Heart left ventricle (tissue), 16 donors: ENCODE measurements at regions of chr5 and their contacts with region 1.

Region 1: DNA sequence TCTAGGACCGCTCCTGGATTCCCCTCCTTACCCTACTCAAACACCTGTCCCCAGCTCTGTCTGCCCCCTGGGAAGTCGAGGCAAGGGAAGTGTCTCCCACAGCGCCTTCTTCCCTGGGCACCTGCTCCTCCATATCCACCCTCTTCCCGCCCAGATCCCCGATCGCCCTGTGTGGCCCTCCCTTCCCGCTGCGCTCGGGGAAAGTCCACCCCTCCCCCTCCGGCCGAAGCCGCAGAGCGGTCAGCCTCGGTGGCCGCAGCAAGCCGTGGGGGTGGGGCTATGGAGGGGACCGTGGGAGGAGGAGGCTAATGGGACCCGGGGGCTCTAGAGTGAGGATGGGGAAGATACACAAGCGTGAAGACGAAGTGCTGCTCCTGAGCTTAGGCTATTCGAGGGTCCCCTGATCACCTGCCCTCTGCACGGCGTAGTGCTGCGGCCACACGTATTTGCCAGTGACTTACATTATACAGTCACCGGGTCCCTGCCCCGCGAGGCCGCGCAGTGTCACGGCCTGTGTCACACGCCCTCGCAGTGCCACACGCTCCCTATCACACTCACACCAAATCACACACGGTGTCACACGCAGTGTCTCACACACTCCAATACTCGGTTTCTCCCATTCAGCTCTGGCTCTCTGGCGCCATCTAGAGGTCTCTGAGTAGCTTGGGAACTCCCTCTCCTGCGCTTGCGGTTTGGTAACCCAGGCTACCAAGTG is 658 bp upstream of the PCDH1 start:
- DNase-seq: peak; percentile 89 to 95 (median 91)
- ATAC-seq: peak; percentile 70 to 87 (median 84)
- H3K4me3 ChIP-seq: peak overlapping the region; percentile 11 to 95 (median 80)
- H3K27ac ChIP-seq: peak overlapping the region; percentile 76 to 94 (median 90)
- H3K4me1 ChIP-seq: peaks cover 0 to 88% (median 60%) of the 10 kb centered on the region in 12 donors
- H3K27me3 ChIP-seq: peaks cover 3 to 91% (median 32%) of the 10 kb centered on the region in 9 donors
- CTCF ChIP-seq: peak; percentile 97 to 99 (median 98)
- POLR2A ChIP-seq: no peak

Region 2: GRCh38 chr5:141691867-141692532 is 186.9 kb before region 1 on chr5:
- intact Hi-C with region 1: loop called in 2 of 10 experiments (anchors 2 kb)
- DNase-seq: peak; percentile 85 to 93 (median 87)
- ATAC-seq: peak; percentile 79 to 91 (median 90)
- H3K4me3 ChIP-seq: peak overlapping the region in 11 of 12 donors; percentile 11 to 51 (median 37)
- H3K27ac ChIP-seq: no peak overlapping the region
- H3K4me1 ChIP-seq: peaks cover 0 to 28% (median 10%) of the 10 kb centered on the region in 12 donors
- H3K27me3 ChIP-seq: peaks cover 0 to 3% (median 0%) of the 10 kb centered on the region in 9 donors
- CTCF ChIP-seq: peak; percentile 98 to 100 (median 99)
- POLR2A ChIP-seq: no peak

Region 3: GRCh38 chr5:141757402-141757801 is 121.5 kb before region 1 on chr5:
- intact Hi-C with region 1: loop called in 6 of 10 experiments (anchors 2 to 5 kb)
- DNase-seq: peak in 1 of 5 donors; percentile 17
- ATAC-seq: peak in 3 of 4 donors; percentile 28 to 47 (median 38)
- H3K4me3 ChIP-seq: no peak overlapping the region
- H3K27ac ChIP-seq: no peak overlapping the region
- H3K4me1 ChIP-seq: peaks cover 0 to 22% (median 10%) of the 10 kb centered on the region in 12 donors
- H3K27me3 ChIP-seq: peaks cover 0 to 37% (median 16%) of the 10 kb centered on the region in 9 donors
- CTCF ChIP-seq: peak in 9 of 12 donors; percentile 6 to 50 (median 29)
- POLR2A ChIP-seq: no peak

Region 4: GRCh38 chr5:141805874-141806595 is 72.8 kb before region 1 on chr5:
- intact Hi-C with region 1: loop called in 7 of 10 experiments (anchors 2 to 10 kb)
- DNase-seq: peak in 4 of 5 donors; percentile 62 to 73 (median 68)
- ATAC-seq: peak; percentile 83 to 92 (median 86)
- H3K4me3 ChIP-seq: no peak overlapping the region
- H3K27ac ChIP-seq: peak overlapping the region; percentile 69 to 94 (median 84)
- H3K4me1 ChIP-seq: peaks cover 0 to 54% (median 32%) of the 10 kb centered on the region in 12 donors
- H3K27me3 ChIP-seq: peaks cover 0 to 30% (median 5%) of the 10 kb centered on the region in 9 donors
- CTCF ChIP-seq: peak in 3 of 12 donors; percentile 5 to 28 (median 12)
- POLR2A ChIP-seq: no peak

Region 5: GRCh38 chr5:141821361-141821925 is 57.4 kb before region 1 on chr5:
- intact Hi-C with region 1: loop called in 7 of 10 experiments (anchors 2 to 10 kb)
- DNase-seq: no peak
- ATAC-seq: peak in 2 of 4 donors; percentile 17 to 23
- H3K4me3 ChIP-seq: no peak overlapping the region
- H3K27ac ChIP-seq: peak overlapping the region; percentile 43 to 78 (median 59)
- H3K4me1 ChIP-seq: peaks cover 0 to 41% (median 15%) of the 10 kb centered on the region in 12 donors
- H3K27me3 ChIP-seq: peaks cover 0 to 3% (median 0%) of the 10 kb centered on the region in 9 donors
- CTCF ChIP-seq: no peak
- POLR2A ChIP-seq: no peak

Region 6: DNA sequence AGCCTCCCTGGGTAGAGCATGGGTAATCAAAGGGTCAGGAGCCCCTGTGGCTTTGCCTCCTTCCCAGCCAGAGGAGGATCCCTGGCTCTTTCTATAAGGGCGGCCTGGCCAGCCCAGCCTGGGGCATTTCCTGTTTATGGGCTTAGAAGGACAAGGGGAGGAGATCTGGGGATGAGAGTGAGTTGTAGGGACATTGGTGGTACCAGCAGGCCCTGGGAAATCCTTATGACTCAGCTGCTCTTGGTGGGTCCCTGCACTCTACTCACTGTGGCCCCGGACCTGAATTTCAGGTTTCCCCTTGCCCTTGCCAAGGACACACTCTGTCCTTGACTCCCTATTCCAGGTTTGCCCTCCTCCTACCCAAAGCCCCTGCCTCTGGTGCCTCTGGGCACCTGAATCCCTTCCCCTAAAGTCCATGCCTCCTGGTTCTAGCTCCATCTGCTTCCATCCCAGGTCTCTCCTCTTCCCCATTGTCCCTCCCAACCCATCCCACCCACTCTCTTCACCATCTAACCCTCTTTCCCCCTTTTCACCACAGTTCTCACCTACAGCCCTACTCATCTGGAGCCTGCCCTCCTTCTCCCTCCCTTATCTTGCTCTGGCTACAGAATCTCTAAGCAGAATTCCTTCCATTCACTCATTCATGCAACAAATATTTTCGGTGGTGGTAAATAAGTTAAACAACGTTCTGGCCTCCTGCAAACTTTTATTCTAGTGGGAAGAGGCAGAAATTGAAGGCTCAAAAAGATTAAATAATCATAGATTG is 35.5 kb before region 1 on chr5:
- intact Hi-C with region 1: loop called in 4 of 10 experiments (anchors 2 to 5 kb)
- DNase-seq: no peak
- ATAC-seq: peak in 2 of 4 donors; percentile 9 to 14
- H3K4me3 ChIP-seq: no peak overlapping the region
- H3K27ac ChIP-seq: peak overlapping the region; percentile 32 to 75 (median 64)
- H3K4me1 ChIP-seq: peaks cover 3 to 72% (median 48%) of the 10 kb centered on the region in 12 donors
- H3K27me3 ChIP-seq: peaks cover 0 to 3% (median 0%) of the 10 kb centered on the region in 9 donors
- CTCF ChIP-seq: no peak
- POLR2A ChIP-seq: no peak

Region 7: DNA sequence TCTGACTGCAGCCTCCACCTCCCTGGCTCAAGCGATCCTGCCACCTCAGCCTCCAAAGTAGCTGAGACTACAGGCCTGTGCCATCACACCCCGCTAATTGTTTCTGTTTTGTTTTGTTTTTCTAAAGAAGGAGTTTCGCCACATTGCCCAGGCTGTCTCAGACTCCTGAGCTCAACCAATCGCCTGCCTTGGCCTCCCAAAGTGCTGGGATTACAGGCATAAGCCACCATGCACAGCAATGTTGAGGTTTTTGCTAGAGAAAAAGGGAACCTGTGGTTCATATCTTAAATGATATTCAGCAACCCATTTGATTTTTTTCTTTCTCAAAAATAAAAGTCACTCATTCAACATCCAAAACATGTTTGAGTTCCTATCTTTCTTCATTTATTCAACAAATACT is 24.4 kb after region 1 on chr5:
- intact Hi-C with region 1: no loop called
- DNase-seq: no peak
- ATAC-seq: no peak
- H3K4me3 ChIP-seq: no peak overlapping the region
- H3K27ac ChIP-seq: peak overlapping the region in 1 of 12 donors; percentile 9
- H3K4me1 ChIP-seq: peaks cover 0 to 19% (median 0%) of the 10 kb centered on the region in 12 donors
- H3K27me3 ChIP-seq: no peaks in the 10 kb centered on the region
- CTCF ChIP-seq: no peak
- POLR2A ChIP-seq: no peak

Region 8: GRCh38 chr5:141923448-141924352 is 44.8 kb after region 1 on chr5 and contains the start of gene DELE1:
- intact Hi-C with region 1: loop called in 4 of 10 experiments (anchors 5 kb)
- DNase-seq: peak; percentile 96 to 98 (median 97)
- ATAC-seq: peak; percentile 97 to 99 (median 98)
- H3K4me3 ChIP-seq: peak within 1 kb of the TSS; percentile 19 to 90 (median 66)
- H3K27ac ChIP-seq: peak within 1 kb of the TSS; percentile 89 to 99 (median 96)
- H3K4me1 ChIP-seq: peaks cover 4 to 46% (median 24%) of the 10 kb centered on the region in 12 donors
- H3K27me3 ChIP-seq: no peaks in the 10 kb centered on the region
- CTCF ChIP-seq: peak in 3 of 12 donors; percentile 8 to 18 (median 9)
- POLR2A ChIP-seq: peak; percentile 13 to 87
- total RNA-seq, gene DELE1: 63.1 to 174 (median 96.0) TPM